Mammary epithelial cell (primary cell): ENCODE measurements at regions of chr17 and their contacts with region 1.

Region 1: DNA sequence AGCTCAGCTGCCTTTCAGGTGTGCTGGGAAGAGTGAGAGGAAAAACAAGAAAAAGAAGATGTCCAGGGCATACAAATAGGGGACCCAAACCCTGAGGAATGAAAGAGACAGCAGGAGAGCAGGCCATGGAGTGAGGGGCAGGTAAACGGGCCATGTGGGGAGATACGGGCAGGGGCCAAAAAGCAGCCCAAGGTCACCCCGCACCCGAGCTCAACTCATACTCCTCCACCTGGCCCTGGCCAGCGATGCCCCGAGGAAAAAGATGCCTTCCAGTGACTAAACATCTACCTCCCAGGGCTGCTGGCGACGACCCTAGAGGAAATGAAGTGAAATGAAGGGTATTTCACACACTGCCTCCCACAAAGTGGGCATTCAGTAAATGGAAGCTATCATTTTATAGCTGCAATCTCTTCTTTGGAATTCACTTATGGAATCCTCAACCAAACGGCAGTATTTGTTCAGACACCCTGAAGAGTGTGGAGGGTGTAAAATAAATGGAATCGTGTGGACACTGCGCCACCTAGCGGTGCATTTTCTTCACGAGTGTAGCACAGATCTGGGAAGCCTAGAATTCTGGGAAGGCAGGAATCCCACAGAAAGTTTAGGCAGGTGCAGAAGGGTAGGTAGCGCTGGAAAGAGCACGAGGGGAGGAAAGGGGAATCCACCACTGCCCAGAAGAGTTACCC is 14.9 kb downstream of the ELAC2 start:
- DNase-seq: peak; percentile 44
- H3K4me3 ChIP-seq: no peak overlapping the region
- H3K27ac ChIP-seq: no peak overlapping the region
- H3K4me1 ChIP-seq: no peaks in the 10 kb centered on the region
- H3K27me3 ChIP-seq: no peaks in the 10 kb centered on the region
- CTCF ChIP-seq: peak; percentile 68 to 79

Region 2: DNA sequence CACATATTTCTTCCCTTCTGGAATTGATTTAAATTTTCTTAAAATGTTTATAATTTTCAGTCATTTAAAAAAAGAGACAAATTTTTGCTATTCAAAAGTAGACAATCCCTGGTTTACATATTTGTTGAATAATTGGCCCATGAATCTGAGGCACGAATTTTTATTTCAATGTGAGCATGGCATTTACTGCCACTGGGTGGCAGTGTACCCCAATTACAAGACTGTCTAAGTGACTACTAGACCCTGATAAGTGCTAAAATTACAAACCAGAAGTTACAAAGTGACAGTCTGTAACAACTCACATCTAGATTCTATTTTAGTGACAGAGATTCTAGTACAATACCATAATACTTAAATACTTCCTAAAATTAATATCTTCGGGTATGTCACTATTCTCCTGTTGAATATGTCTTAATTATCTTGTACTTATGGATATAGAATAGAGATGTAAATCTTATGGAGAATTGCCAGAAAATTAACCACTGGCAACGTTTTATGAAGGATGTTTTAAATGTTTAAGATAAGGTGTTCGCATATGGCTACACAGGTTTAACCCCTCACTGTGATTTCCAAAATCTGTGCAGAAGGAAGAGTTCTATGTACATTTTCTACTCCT is 746.4 kb before region 1 on chr17:
- CTCF ChIA-PET with region 1: no interaction called
- dilution Hi-C with region 1: no loop called
- in situ Hi-C with region 1: no loop called
- intact Hi-C with region 1: loop called (anchors 2 kb)
- DNase-seq: peak; percentile 16
- H3K4me3 ChIP-seq: no peak overlapping the region
- H3K27ac ChIP-seq: no peak overlapping the region
- H3K4me1 ChIP-seq: no peaks in the 10 kb centered on the region
- H3K27me3 ChIP-seq: no peaks in the 10 kb centered on the region
- CTCF ChIP-seq: peak; percentile 62 to 65

Region 3: GRCh38 chr17:12659500-12659899 is 343.4 kb before region 1 on chr17:
- CTCF ChIA-PET with region 1: no interaction called
- dilution Hi-C with region 1: no loop called
- in situ Hi-C with region 1: no loop called
- intact Hi-C with region 1: no loop called
- DNase-seq: no peak
- H3K4me3 ChIP-seq: no peak overlapping the region
- H3K27ac ChIP-seq: no peak overlapping the region
- H3K4me1 ChIP-seq: no peaks in the 10 kb centered on the region
- H3K27me3 ChIP-seq: peaks cover under 1% of the 10 kb centered on the region
- CTCF ChIP-seq: no peak

Region 4: GRCh38 chr17:12683299-12683698 is 319.6 kb before region 1 on chr17:
- CTCF ChIA-PET with region 1: no interaction called
- dilution Hi-C with region 1: no loop called
- in situ Hi-C with region 1: no loop called
- intact Hi-C with region 1: no loop called
- DNase-seq: no peak
- H3K4me3 ChIP-seq: no peak overlapping the region
- H3K27ac ChIP-seq: no peak overlapping the region
- H3K4me1 ChIP-seq: no peaks in the 10 kb centered on the region
- H3K27me3 ChIP-seq: no peaks in the 10 kb centered on the region
- CTCF ChIP-seq: no peak